ENCODE measurements at regions of chr12 and their contacts with region 1.

Region 1: DNA sequence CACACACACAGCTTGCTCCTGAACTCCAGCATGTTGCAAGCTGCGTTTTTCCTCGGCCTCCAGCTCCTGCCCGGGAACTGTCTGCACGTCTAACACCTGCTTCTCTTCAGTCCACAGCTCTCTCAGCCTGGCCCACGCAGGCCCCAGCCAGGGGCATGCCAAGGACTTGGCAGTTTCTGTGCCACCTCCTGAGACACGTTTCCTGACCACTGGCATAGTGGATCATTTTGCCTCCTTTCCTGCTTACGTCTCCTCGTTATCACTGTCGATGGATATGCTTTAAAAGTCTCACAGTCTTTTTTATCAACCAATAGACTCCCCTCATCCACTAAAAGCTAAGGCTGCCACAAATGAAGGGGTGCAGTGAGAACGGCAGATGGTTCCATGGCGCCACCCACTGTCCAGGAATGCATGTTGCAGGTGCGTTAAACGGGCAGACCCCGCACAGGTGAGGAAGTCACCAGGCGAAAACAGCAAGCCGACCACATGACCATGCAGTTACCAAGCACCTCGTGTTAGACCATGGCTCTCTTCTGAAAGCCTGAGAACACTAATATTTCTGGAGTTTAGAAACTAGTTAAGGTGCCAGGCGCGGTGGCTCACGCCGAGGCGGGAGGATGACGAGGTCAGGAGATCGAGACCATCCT is 14.7 kb upstream of the TEAD4 start:
- DNase-seq: peak; percentile 38
- H3K4me3 Mint-ChIP-seq: no peak overlapping the region
- H3K27ac Mint-ChIP-seq: no peak overlapping the region
- H3K4me1 Mint-ChIP-seq: peaks cover 6% of the 10 kb centered on the region
- H3K27me3 Mint-ChIP-seq: peaks cover 9% of the 10 kb centered on the region

Region 2: GRCh38 chr12:2853626-2854025 is 90.9 kb before region 1 on chr12:
- intact Hi-C with region 1: loop called (anchors 1 kb)
- DNase-seq: peak; percentile 19
- H3K4me3 Mint-ChIP-seq: no peak overlapping the region
- H3K27ac Mint-ChIP-seq: no peak overlapping the region
- H3K4me1 Mint-ChIP-seq: no peaks in the 10 kb centered on the region
- H3K27me3 Mint-ChIP-seq: no peaks in the 10 kb centered on the region

Region 3: GRCh38 chr12:2884810-2885209 is 59.7 kb before region 1 on chr12:
- intact Hi-C with region 1: loop called (anchors 1 kb)
- DNase-seq: no peak
- H3K4me3 Mint-ChIP-seq: no peak overlapping the region
- H3K27ac Mint-ChIP-seq: peak overlapping the region; percentile 2
- H3K4me1 Mint-ChIP-seq: peaks cover 35% of the 10 kb centered on the region
- H3K27me3 Mint-ChIP-seq: no peaks in the 10 kb centered on the region

Measured in activated T-helper 1 cell treated with anti-CD3 and anti-CD28 coated beads, Interleukin-12 subunit alpha, Interleukin-12 subunit beta, Interleukin-2, Interleukin-4 antibody, amounts not matched to agents 30 ng/mL and 10 ng/mL and 1 ng/mL, durations not matched to agents 14 hours and 24 hours and 36 hours (primary cell).